Endothelial cell of umbilical vein (primary cell): ENCODE measurements at regions of chr1 and their contacts with region 1.

Region 1: DNA sequence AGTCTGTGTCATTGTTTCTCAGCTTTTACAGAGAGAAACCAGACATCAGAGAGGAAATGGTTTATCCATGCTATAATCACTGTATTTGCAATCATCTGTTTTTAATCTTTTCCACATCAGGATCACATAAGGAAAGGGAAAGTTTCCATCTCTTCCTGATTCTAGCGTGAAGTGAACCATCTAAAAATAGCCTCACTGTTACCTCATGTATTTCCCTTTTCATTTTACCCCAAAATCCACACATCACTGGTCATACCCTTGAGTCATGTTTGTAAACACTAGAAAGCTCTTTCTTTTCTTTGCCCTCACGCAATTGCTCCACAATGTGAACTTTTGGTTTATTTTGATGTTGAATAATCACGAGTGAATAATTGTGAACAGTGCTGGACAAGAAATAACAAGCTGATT is 146.0 kb downstream of the PLA2G4A start:
- DNase-seq: peak; percentile 98
- H3K4me3 ChIP-seq: peak overlapping the region in 1 of 3 experiments; percentile 12
- H3K27ac ChIP-seq: peak overlapping the region; percentile 93
- H3K4me1 ChIP-seq: peaks cover 49% of the 10 kb centered on the region
- H3K27me3 ChIP-seq: no peaks in the 10 kb centered on the region
- CTCF ChIP-seq: no peak
- POLR2A ChIP-seq: peak; percentile 28

Region 2: DNA sequence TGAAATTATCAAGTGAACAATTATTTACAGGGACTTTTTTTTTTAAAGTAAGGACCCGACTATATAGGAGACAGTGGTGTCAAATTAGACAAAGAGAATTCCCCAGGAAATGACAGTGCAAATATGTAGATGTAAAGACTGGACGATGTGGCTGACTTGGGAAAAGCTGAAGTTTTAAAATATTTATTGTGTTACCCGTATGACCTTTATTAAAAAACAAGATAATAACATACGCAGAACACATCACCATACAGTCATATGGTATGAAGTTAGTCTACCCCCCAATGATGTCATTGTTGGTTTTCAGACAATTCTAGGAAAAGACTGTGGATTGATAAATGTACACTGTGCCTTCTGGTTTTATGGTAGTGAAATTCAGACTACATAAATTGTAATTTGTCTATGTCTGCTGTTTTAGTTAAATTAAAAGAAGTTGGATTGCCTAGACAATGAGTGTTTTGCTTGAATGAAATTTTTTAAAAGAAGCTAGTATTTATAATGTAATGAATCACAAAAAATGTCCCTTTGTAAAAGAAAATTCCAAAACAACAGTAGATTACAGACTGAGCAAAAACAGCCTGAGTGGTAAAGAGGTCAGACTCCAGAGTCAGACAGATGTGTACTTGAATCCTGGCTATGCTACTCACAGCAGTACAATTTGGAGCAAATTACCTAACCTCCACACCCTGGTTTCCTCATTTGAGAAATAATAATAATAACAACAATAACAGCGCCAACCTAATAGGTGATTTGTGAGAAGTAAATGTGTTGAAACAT is 498.3 kb before region 1 on chr1:
- CTCF ChIA-PET with region 1: no interaction called
- POLR2A ChIA-PET with region 1: no interaction called
- dilution Hi-C with region 1: no loop called
- intact Hi-C with region 1: loop called (anchors 1 kb)
- DNase-seq: peak; percentile 95
- H3K4me3 ChIP-seq: peak overlapping the region in 1 of 3 experiments; percentile 15
- H3K27ac ChIP-seq: peak overlapping the region; percentile 95
- H3K4me1 ChIP-seq: peaks cover 24% of the 10 kb centered on the region
- H3K27me3 ChIP-seq: no peaks in the 10 kb centered on the region
- CTCF ChIP-seq: no peak
- POLR2A ChIP-seq: no peak

Region 3: GRCh38 chr1:186839041-186839400 is 135.8 kb before region 1 on chr1:
- CTCF ChIA-PET with region 1: no interaction called
- POLR2A ChIA-PET with region 1: no interaction called
- dilution Hi-C with region 1: no loop called
- intact Hi-C with region 1: loop called (anchors 5 kb)
- DNase-seq: no peak
- H3K4me3 ChIP-seq: no peak overlapping the region
- H3K27ac ChIP-seq: no peak overlapping the region
- H3K4me1 ChIP-seq: peaks cover 10% of the 10 kb centered on the region
- H3K27me3 ChIP-seq: no peaks in the 10 kb centered on the region
- CTCF ChIP-seq: no peak
- POLR2A ChIP-seq: no peak